Posterior cingulate gyrus (tissue), 11 donors: ENCODE measurements at regions of chr2 and their contacts with region 1.

Region 1: DNA sequence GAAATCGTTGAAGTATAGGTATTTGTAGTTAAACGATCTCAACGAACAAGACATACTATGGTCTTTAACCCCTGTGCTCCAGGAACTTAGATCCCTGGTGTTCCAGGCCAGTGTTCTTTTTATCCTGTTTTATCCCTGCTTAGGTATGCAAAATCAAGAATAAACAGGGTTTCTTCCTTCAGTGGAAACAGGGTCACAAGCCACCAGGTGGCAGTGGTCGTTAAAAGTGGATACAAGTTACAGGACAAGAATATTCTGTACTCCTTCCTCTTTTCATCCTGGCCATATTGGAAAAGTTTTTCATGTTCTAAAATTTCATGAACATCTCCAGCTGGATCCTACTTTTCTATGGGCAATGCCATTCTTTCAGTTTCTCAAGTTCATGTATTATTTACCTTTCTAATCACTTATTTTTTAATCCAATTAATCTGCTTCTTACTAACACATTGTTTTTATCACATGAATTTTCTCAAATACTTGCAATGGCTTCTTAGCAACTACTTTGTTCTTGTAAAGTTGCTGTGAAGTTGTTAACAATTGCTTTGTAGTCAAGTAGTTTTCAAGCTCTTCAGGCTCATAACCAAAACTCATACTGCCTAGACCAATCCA is 16.4 kb upstream of the HNMT start:
- DNase-seq: peak in 9 of 10 donors; percentile 37 to 93 (median 73)

Region 2: GRCh38 chr2:138023298-138023697 is 75.5 kb after region 1 on chr2:
- intact Hi-C with region 1: no loop called
- DNase-seq: no peak

Region 3: GRCh38 chr2:138090330-138090729 is 142.5 kb after region 1 on chr2:
- intact Hi-C with region 1: loop called (anchors 1 kb)
- DNase-seq: no peak